H1 (cell line): ENCODE measurements at regions of chr22 and their contacts with region 1.

Region 1: GRCh38 chr22:37643225-37643847 is 3.9 kb downstream of the SH3BP1 start:
- DNase-seq: peak in 1 of 2 experiments; percentile 100
- H3K4me3 ChIP-seq: no peak overlapping the region
- H3K27ac ChIP-seq: no peak overlapping the region
- H3K4me1 ChIP-seq: peaks cover 0 to 18% (median 14%) of the 10 kb centered on the region in 4 experiments; a peak in 6 of 7 replicates
- H3K27me3 ChIP-seq: no peaks in the 10 kb centered on the region
- CTCF ChIP-seq: peak; percentile 81 to 92 (median 91)
- EP300 ChIP-seq: no peak
- POLR2A ChIP-seq: no peak
- RAD21 ChIP-seq: peak; percentile 59 to 83

Region 2: DNA sequence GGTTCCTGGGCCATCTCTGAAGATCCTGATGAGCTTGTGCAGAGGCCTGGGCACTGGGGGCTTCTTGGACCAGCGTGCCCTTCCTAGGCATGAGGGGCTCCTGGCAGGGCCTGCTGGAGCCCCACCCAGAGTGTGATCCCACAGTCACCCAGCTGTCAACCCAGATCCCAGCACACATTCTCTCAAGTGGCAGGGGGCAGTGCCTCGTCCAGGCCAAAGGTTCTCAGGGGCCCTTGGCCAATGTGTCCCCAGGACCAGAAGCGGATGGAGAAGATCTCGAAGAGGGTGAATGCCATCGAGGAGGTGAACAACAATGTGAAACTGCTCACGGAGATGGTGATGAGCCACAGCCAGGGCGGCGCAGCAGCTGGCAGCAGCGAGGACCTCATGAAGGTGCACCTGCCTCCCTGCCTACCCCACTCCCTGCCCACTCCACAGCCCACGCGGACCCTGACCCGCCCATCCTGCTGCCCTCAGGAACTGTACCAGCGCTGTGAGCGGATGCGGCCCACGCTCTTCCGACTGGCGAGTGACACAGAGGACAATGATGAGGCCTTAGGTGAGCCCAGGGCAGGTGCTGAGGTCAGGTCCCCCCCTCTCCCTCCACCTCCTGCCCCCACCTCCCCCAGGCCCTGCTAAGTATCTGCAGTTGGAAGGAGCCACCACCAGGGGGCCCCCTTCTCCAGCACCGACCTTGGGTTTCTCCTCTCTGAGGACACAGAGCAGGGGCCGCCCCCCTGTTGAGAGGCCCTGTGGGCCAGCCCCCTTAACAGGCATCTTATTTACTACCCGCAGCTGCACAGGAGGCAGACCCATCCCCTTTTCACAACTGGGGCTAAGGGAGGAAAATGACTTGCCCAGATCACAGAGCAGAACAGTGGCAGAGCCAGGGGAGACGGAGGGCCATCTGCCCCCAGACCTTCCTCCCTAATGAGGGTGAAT is 20.0 kb before region 1 on chr22:
- CTCF ChIA-PET with region 1: interaction called, 140 read pairs
- POLR2A ChIA-PET with region 1: interaction called, 8 read pairs
- DNase-seq: peak in 1 of 2 experiments; percentile 95
- H3K4me3 ChIP-seq: no peak overlapping the region
- H3K27ac ChIP-seq: no peak overlapping the region
- H3K4me1 ChIP-seq: peaks cover 0 to 3% (median 0%) of the 10 kb centered on the region in 4 experiments; a peak in 3 of 7 replicates
- H3K27me3 ChIP-seq: no peaks in the 10 kb centered on the region
- CTCF ChIP-seq: peak; percentile 50 to 72 (median 69)
- EP300 ChIP-seq: no peak
- POLR2A ChIP-seq: no peak
- RAD21 ChIP-seq: peak; percentile 60 to 72

Region 3: DNA sequence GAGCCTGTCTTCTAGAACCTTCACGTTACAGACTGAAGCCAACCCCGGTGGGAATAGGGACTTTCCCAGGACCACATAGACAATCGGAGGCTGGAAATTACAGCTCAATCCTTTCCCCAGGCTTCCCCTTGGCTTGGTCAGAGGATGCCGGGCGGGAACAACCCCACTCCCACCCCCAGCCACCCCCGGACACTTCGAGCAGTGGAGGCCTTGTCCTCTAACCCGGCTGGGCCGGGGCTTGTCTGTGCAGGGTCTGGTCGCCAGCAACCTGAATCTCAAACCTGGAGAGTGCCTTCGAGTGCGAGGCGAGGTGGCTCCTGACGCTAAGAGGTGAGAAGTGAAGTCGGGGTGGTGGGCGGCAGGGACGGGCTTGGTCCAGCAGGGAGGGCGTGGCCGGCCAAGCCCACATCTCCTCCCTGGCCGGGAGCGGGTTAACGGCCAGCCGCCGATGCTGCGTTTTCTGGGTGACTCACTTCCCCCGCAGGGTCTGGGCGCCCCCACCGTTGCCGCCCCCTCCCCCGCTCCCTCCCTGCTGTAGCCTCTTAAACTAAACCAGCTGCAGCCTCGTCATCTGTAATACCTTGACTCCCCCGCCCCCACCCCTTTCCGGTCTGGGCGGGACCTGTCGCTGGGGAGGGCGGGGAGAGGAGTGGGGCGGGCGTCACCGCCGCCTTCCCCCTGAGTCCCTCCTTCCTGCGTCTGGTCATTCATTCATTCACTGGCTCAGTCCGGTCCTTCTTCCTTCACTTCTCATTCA is 33.6 kb after region 1 on chr22:
- CTCF ChIA-PET with region 1: interaction called, 261 read pairs
- POLR2A ChIA-PET with region 1: interaction called, 15 read pairs
- DNase-seq: peak; percentile 78 to 87
- H3K4me3 ChIP-seq: peak overlapping the region; percentile 28 to 63 (median 36)
- H3K27ac ChIP-seq: no peak overlapping the region
- H3K4me1 ChIP-seq: peaks cover 0 to 19% (median 13%) of the 10 kb centered on the region in 4 experiments; a peak in 6 of 7 replicates
- H3K27me3 ChIP-seq: peaks cover 0 to 2% (median 0%) of the 10 kb centered on the region in 4 experiments; a peak in 1 of 7 replicates
- CTCF ChIP-seq: no peak
- EP300 ChIP-seq: 0 out of 3 replicates have a peak, but pooled peaks of 1 of the 2 experiments have one; percentile 27
- POLR2A ChIP-seq: peak in 1 of 2 experiments; percentile 26; a peak in 1 of 3 replicates
- RAD21 ChIP-seq: no peak

Region 4: DNA sequence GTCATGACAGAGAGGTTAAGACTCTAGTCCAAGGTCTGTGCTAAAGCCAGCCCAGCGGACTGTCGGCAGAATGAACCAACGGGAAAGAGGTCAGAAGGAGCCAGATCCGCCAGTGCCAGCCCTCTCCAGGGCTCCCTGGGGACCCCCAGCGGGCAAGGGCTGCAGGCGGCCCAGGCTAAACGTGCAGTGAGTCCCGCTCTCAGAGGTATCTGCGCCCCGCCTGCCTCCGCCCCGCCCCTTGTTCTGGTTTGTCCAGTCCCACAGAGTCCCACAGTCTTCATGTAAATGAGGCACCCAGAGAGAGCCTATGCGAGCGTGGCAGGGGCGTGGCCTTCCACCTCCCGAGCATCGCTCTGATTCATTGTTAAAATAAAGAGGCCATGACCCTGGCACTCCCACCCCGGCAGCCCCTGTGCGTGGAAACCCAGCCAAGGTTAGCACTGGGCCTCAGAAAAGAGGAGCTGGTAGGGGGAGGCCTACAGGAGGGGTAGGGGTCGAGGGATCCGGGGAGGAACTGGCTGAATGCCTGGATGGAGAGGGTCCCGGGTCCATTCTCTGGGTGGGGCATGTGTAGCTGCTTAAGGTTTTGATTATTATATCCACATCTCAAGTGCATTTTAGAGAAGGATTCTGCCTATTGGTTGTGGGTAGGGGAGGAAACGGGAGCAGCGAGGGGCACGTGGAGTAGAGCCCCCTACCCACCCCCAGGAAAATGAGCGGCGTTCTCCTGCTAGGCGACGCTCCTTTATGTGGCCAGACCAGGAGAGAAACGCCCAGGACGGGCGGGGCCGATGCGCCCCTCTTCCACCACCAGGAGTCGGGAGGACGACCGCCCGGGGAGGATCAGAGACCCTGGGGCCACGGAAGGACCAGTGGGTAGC is 53.6 kb after region 1 on chr22 and contains the start of gene TRIOBP:
- CTCF ChIA-PET with region 1: interaction called, 37 read pairs
- POLR2A ChIA-PET with region 1: interaction called, 8 read pairs
- DNase-seq: peak; percentile 92 to 97
- H3K4me3 ChIP-seq: peak within 1 kb of the TSS; percentile 52 to 76 (median 72)
- H3K27ac ChIP-seq: peak within 1 kb of the TSS; percentile 31
- H3K4me1 ChIP-seq: peaks cover 0 to 4% (median 0%) of the 10 kb centered on the region in 4 experiments; a peak in 2 of 7 replicates
- H3K27me3 ChIP-seq: no peaks in the 10 kb centered on the region
- CTCF ChIP-seq: peak; percentile 42 to 51 (median 49); a peak in 3 of 4 replicates
- EP300 ChIP-seq: no peak
- POLR2A ChIP-seq: peak in 1 of 2 experiments; percentile 58; a peak in 1 of 3 replicates
- RAD21 ChIP-seq: peak in 1 of 2 experiments; percentile 47; a peak in 1 of 4 replicates
- total RNA-seq, gene TRIOBP: 27.3 and 29.1 TPM in 2 replicates

Region 5: GRCh38 chr22:37750292-37751146 is 107.2 kb after region 1 on chr22:
- CTCF ChIA-PET with region 1: no interaction called
- POLR2A ChIA-PET with region 1: no interaction called
- DNase-seq: no peak
- H3K4me3 ChIP-seq: no peak overlapping the region
- H3K27ac ChIP-seq: no peak overlapping the region
- H3K4me1 ChIP-seq: peaks cover 0 to 21% (median 11%) of the 10 kb centered on the region in 4 experiments; a peak in 6 of 7 replicates
- H3K27me3 ChIP-seq: peaks cover 0 to 5% (median 2%) of the 10 kb centered on the region in 4 experiments; a peak in 3 of 7 replicates
- CTCF ChIP-seq: no peak
- EP300 ChIP-seq: no peak
- POLR2A ChIP-seq: no peak
- RAD21 ChIP-seq: no peak

Region 6: GRCh38 chr22:37862570-37863325 is 219.4 kb after region 1 on chr22:
- CTCF ChIA-PET with region 1: no interaction called
- POLR2A ChIA-PET with region 1: no interaction called
- DNase-seq: no peak
- H3K4me3 ChIP-seq: no peak overlapping the region
- H3K27ac ChIP-seq: 0 out of 2 replicates have a peak overlapping the region, but pooled peaks have one; percentile 22
- H3K4me1 ChIP-seq: no peaks in the 10 kb centered on the region
- H3K27me3 ChIP-seq: no peaks in the 10 kb centered on the region
- CTCF ChIP-seq: no peak
- EP300 ChIP-seq: no peak
- POLR2A ChIP-seq: no peak; a peak in 1 of 3 replicates
- RAD21 ChIP-seq: no peak

Region 7: GRCh38 chr22:37906364-37907020 is 263.2 kb after region 1 on chr22:
- CTCF ChIA-PET with region 1: no interaction called
- POLR2A ChIA-PET with region 1: no interaction called
- DNase-seq: peak in 1 of 2 experiments; percentile 61
- H3K4me3 ChIP-seq: peak overlapping the region; percentile 45 to 74 (median 59)
- H3K27ac ChIP-seq: no peak overlapping the region
- H3K4me1 ChIP-seq: peaks cover 0 to 27% (median 21%) of the 10 kb centered on the region in 4 experiments; a peak in 6 of 7 replicates
- H3K27me3 ChIP-seq: no peaks in the 10 kb centered on the region
- CTCF ChIP-seq: no peak
- EP300 ChIP-seq: no peak
- POLR2A ChIP-seq: no peak
- RAD21 ChIP-seq: no peak